ENCODE measurements at regions of chr5 and their contacts with region 1.

Region 1: DNA sequence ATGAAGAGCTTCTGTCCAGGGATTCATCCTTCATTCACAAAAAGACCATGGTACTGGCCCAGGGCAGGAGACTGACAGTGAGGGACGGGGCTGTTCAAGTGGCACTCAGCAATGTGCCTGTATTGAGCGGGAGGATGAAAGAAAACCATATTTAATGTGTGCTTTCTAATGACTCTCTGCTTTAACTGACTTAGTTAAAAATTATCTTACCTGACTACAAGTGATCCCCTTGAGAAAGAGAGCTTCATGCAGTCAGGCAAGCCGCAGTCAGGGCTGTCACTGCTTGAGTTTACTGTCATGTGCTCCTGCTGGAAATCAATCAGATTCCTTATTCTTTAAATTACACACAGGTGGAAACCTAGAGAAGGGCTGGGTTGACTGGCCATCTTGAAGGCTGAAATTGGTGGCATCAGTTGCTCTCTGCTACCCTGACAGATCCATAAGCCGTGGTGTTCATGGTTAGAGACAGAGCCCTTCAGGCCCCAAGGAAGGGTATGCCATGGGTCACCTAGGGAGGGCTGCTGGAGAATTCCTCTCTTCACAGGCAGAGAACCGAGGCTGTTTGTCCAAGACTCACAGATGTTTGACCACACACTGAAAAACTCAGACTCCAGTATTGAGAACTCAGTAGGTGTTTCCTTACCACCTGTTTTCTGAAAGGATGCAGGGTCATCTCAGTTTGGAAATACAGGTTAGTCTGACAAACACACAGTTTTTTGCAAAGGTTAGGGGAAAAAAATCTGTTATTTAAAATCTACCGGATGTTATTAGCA is 70.9 kb downstream of the TRIO start:
- DNase-seq: no peak
- ATAC-seq: peak; percentile 5
- H3K4me3 Mint-ChIP-seq: peak overlapping the region; percentile 49
- H3K27ac Mint-ChIP-seq: peak overlapping the region; percentile 85
- H3K4me1 Mint-ChIP-seq: peaks cover 96% of the 10 kb centered on the region
- H3K27me3 Mint-ChIP-seq: no peaks in the 10 kb centered on the region
- CTCF ChIP-seq: no peak

Region 2: GRCh38 chr5:14225173-14225834 is 11.3 kb after region 1 on chr5:
- CTCF ChIA-PET with region 1: no interaction called
- POLR2A ChIA-PET with region 1: interaction called, 6 read pairs
- intact Hi-C with region 1: loop called (anchors 1 kb)
- DNase-seq: no peak
- ATAC-seq: peak; percentile 52
- H3K4me3 Mint-ChIP-seq: peak overlapping the region; percentile 4
- H3K27ac Mint-ChIP-seq: no peak overlapping the region
- H3K4me1 Mint-ChIP-seq: peaks cover 89% of the 10 kb centered on the region
- H3K27me3 Mint-ChIP-seq: no peaks in the 10 kb centered on the region
- CTCF ChIP-seq: no peak

Measured in activated B cell treated with CpG ODN at 0.5 μM for 24 hours (primary cell).